Activated CD4-positive, alpha-beta memory T cell treated with anti-CD3 and anti-CD28 coated beads for 36 hours (primary cell): ENCODE measurements at regions of chr12 and their contacts with region 1.

Region 1: GRCh38 chr12:52278541-52279421 is 4.3 kb downstream of the KRT86 start:
- DNase-seq: peak; percentile 81
- H3K4me3 Mint-ChIP-seq: no peak overlapping the region
- H3K27ac Mint-ChIP-seq: no peak overlapping the region
- H3K4me1 Mint-ChIP-seq: peaks cover 9% of the 10 kb centered on the region
- H3K27me3 Mint-ChIP-seq: peaks cover 19% of the 10 kb centered on the region

Region 2: GRCh38 chr12:52156736-52157565 is 121.8 kb before region 1 on chr12:
- CTCF ChIA-PET with region 1: interaction called, 18 read pairs
- POLR2A ChIA-PET with region 1: no interaction called
- intact Hi-C with region 1: loop called (anchors 2 kb)
- DNase-seq: peak; percentile 81
- H3K4me3 Mint-ChIP-seq: no peak overlapping the region
- H3K27ac Mint-ChIP-seq: no peak overlapping the region
- H3K4me1 Mint-ChIP-seq: peaks cover 28% of the 10 kb centered on the region
- H3K27me3 Mint-ChIP-seq: no peaks in the 10 kb centered on the region

Region 3: DNA sequence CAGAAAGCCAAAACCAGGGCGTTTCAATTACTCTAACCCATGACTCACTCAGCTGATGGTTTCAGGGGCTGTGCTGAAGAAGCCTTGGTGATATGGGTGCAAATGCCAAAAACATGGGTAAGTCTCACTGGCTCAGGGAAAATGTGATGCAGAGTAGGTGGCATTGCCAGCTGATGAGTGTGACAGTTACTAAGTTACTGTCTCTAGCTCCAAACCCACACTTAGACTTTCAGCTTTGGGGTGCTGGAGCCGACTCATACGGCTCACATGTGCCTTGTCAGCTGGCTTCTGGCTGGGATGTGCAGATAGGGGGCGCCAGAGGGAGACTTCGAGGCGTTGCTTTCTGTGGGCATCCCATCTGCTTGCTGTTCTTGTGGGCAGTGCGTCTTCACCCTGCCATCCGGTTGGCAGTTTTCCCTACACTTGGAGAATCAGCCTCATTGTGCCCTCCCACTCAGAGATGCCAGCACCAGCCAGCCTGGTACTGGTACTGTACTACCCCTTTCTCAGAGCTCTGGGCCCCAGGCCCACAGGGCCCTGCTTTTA is 56.8 kb before region 1 on chr12:
- CTCF ChIA-PET with region 1: interaction called, 23 read pairs
- POLR2A ChIA-PET with region 1: no interaction called
- intact Hi-C with region 1: loop called (anchors 1 kb)
- DNase-seq: peak; percentile 93
- H3K4me3 Mint-ChIP-seq: no peak overlapping the region
- H3K27ac Mint-ChIP-seq: peak overlapping the region; percentile 26
- H3K4me1 Mint-ChIP-seq: peaks cover 16% of the 10 kb centered on the region
- H3K27me3 Mint-ChIP-seq: peaks cover 37% of the 10 kb centered on the region

Region 4: GRCh38 chr12:52268212-52268611 is 10.6 kb before region 1 on chr12:
- CTCF ChIA-PET with region 1: interaction called, 21 read pairs
- POLR2A ChIA-PET with region 1: no interaction called
- intact Hi-C with region 1: no loop called
- DNase-seq: no peak
- H3K4me3 Mint-ChIP-seq: no peak overlapping the region
- H3K27ac Mint-ChIP-seq: no peak overlapping the region
- H3K4me1 Mint-ChIP-seq: no peaks in the 10 kb centered on the region
- H3K27me3 Mint-ChIP-seq: peaks cover 11% of the 10 kb centered on the region

Region 5: DNA sequence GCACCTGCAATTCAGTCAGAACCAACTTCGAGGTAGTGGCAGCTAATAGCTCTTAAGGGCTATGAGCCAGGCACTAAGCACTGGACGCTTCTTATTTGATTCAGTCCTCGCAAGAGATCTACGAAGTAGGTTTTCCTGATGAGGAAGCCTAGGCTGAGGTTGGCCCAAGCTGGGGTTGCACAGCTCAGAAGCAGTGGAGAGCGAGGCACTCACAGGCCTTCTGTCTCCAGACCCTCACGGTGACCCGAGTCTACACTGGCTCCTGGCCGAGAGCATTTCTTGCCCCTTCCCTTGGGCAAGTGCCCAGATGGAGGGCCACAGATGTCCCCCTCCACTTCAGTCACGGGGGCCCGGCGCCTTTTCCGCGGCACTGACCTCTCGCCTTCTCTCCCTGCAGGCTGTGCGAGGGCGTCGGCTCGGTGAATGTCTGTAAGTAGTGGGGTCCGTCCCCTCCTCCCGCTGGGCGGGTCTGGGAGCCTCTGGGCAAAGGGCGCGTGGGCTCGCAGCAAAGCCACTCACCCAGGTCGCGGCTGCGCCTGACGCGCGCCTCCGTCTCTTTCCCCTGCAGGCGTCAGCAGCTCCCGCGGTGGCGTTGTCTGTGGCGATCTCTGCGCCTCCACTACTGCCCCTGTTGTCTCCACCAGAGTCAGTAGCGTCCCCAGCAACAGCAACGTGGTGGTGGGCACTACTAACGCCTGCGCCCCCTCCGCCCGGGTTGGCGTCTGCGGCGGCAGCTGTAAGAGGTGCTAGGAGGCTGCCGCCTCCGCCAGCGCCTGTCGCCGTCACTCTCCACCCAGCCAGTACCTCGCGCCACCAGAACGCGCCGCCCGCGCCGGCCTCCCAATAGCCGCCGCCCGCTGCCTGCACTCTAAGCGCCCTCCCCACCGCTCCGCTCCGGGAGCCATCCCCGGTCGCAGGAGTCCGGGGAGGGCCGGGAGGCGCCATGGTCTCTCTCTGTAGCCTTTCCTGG is 29.3 kb after region 1 on chr12:
- CTCF ChIA-PET with region 1: interaction called, 29 read pairs
- POLR2A ChIA-PET with region 1: interaction called, 3 read pairs
- intact Hi-C with region 1: no loop called
- DNase-seq: peak; percentile 62
- H3K4me3 Mint-ChIP-seq: peak overlapping the region; percentile 47
- H3K27ac Mint-ChIP-seq: no peak overlapping the region
- H3K4me1 Mint-ChIP-seq: peaks cover 16% of the 10 kb centered on the region
- H3K27me3 Mint-ChIP-seq: peaks cover 50% of the 10 kb centered on the region